ENCODE measurements at regions of chr3 and their contacts with region 1.

Region 1: GRCh38 chr3:101512646-101513418 is at the start of gene SENP7:
- DNase-seq: peak; percentile 55 to 90 (median 74)
- ATAC-seq: peak; percentile 51
- H3K4me3 ChIP-seq: peak within 1 kb of the TSS; percentile 68
- H3K4me3 Mint-ChIP-seq: peak within 1 kb of the TSS; percentile 99
- H3K27ac ChIP-seq: peak within 1 kb of the TSS; percentile 87 to 88
- H3K27ac Mint-ChIP-seq: peak within 1 kb of the TSS; percentile 96
- H3K4me1 ChIP-seq: peaks cover 22% of the 10 kb centered on the region
- H3K4me1 Mint-ChIP-seq: peaks cover 61% of the 10 kb centered on the region
- H3K27me3 ChIP-seq: no peaks in the 10 kb centered on the region
- H3K27me3 Mint-ChIP-seq: no peaks in the 10 kb centered on the region
- CTCF ChIP-seq: no peak
- total RNA-seq, gene SENP7: 37.5 to 39.3 TPM

Region 2: DNA sequence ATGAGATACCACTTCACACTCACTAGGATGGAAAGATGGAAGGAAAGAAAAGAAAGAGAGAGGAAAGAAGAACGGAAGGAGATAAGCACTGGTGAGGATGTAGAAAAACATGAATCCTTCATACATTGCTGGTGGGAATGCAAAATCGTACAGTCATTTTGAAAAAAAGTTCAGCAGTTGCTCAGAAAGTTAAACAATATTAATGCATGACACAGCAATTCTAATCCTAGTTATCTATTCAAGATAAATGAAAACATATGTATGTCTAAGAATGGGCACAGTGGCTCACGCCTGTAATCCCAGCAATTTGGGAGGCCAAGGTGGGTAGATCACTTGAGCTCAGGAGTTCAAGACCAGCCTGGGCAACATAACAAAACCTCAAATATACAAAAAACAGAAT is 58.9 kb before region 1 on chr3:
- CTCF ChIA-PET with region 1: no interaction called
- POLR2A ChIA-PET with region 1: no interaction called
- intact Hi-C with region 1: no loop called
- DNase-seq: no peak
- ATAC-seq: no peak
- H3K4me3 ChIP-seq: no peak overlapping the region
- H3K4me3 Mint-ChIP-seq: no peak overlapping the region
- H3K27ac ChIP-seq: no peak overlapping the region
- H3K27ac Mint-ChIP-seq: peak overlapping the region; percentile 16
- H3K4me1 ChIP-seq: no peaks in the 10 kb centered on the region
- H3K4me1 Mint-ChIP-seq: peaks cover 42% of the 10 kb centered on the region
- H3K27me3 ChIP-seq: no peaks in the 10 kb centered on the region
- H3K27me3 Mint-ChIP-seq: no peaks in the 10 kb centered on the region
- CTCF ChIP-seq: no peak

Region 3: GRCh38 chr3:101466465-101467309 is 46.1 kb before region 1 on chr3:
- CTCF ChIA-PET with region 1: no interaction called
- POLR2A ChIA-PET with region 1: interaction called, 3 read pairs
- intact Hi-C with region 1: loop called (anchors 5 kb)
- DNase-seq: peak in 8 of 14 experiments; percentile 47 to 75 (median 68)
- ATAC-seq: peak; percentile 79
- H3K4me3 ChIP-seq: peak overlapping the region; percentile 48
- H3K4me3 Mint-ChIP-seq: peak overlapping the region; percentile 83
- H3K27ac ChIP-seq: peak overlapping the region; percentile 13 to 64
- H3K27ac Mint-ChIP-seq: peak overlapping the region; percentile 89
- H3K4me1 ChIP-seq: peaks cover 19% of the 10 kb centered on the region
- H3K4me1 Mint-ChIP-seq: peaks cover 77% of the 10 kb centered on the region
- H3K27me3 ChIP-seq: no peaks in the 10 kb centered on the region
- H3K27me3 Mint-ChIP-seq: no peaks in the 10 kb centered on the region
- CTCF ChIP-seq: no peak

Region 4: DNA sequence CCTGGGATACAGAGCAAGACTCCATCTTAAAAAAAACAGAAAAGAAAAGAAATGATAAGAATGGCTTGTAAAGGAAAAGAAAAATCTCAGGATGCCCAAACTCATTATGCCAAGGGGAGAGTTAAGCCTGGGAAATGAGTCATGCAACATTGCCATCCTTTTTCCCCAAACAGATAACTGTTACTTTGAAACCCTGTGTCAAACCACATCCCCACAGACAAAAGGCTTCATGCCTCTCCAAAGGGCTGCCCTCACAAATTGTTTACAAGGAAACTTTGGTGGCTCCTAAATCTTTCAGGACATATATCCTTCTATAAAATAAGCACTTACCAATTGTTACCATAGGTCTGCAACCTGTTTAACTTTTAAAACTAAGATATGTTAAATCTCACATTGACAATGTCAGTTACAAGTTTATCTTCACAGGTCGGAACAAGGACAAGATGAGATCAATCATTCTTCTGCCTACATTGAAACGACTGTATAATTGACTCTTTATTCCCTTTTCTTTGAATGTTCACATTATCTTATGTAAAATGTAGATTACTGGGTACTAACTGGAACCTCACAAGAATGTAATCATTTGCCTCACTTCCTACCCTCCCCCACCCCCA is 18.7 kb after region 1 on chr3:
- CTCF ChIA-PET with region 1: interaction called, 5 read pairs
- POLR2A ChIA-PET with region 1: interaction called, 72 read pairs
- intact Hi-C with region 1: loop called in 1 of 2 experiments (anchors 2 kb)
- DNase-seq: peak in 3 of 14 experiments; percentile 39 to 56 (median 49)
- ATAC-seq: peak; percentile 71
- H3K4me3 ChIP-seq: no peak overlapping the region
- H3K4me3 Mint-ChIP-seq: peak overlapping the region; percentile 4
- H3K27ac ChIP-seq: peak overlapping the region in 1 of 2 donors; percentile 61
- H3K27ac Mint-ChIP-seq: peak overlapping the region; percentile 85
- H3K4me1 ChIP-seq: peaks cover 22% of the 10 kb centered on the region
- H3K4me1 Mint-ChIP-seq: peaks cover 52% of the 10 kb centered on the region
- H3K27me3 ChIP-seq: no peaks in the 10 kb centered on the region
- H3K27me3 Mint-ChIP-seq: no peaks in the 10 kb centered on the region
- CTCF ChIP-seq: no peak

Region 5: GRCh38 chr3:101544161-101544850 is 31.5 kb after region 1 on chr3:
- CTCF ChIA-PET with region 1: interaction called, 3 read pairs
- POLR2A ChIA-PET with region 1: interaction called, 39 read pairs
- intact Hi-C with region 1: no loop called
- DNase-seq: peak in 1 of 14 experiments; percentile 20
- ATAC-seq: peak; percentile 53
- H3K4me3 ChIP-seq: no peak overlapping the region
- H3K4me3 Mint-ChIP-seq: peak overlapping the region; percentile 38
- H3K27ac ChIP-seq: peak overlapping the region in 1 of 2 donors; percentile 35
- H3K27ac Mint-ChIP-seq: peak overlapping the region; percentile 93
- H3K4me1 ChIP-seq: peaks cover 19% of the 10 kb centered on the region
- H3K4me1 Mint-ChIP-seq: peaks cover 47% of the 10 kb centered on the region
- H3K27me3 ChIP-seq: no peaks in the 10 kb centered on the region
- H3K27me3 Mint-ChIP-seq: no peaks in the 10 kb centered on the region
- CTCF ChIP-seq: peak; percentile 50

Region 6: GRCh38 chr3:101561630-101562328 is 48.9 kb after region 1 on chr3 and contains the start of gene TRMT10C:
- CTCF ChIA-PET with region 1: no interaction called
- POLR2A ChIA-PET with region 1: interaction called, 32 read pairs
- intact Hi-C with region 1: loop called (anchors 1 to 2 kb)
- DNase-seq: peak; percentile 87 to 97 (median 91)
- ATAC-seq: peak; percentile 94
- H3K4me3 ChIP-seq: peak within 1 kb of the TSS; percentile 93
- H3K4me3 Mint-ChIP-seq: peak within 1 kb of the TSS; percentile 97
- H3K27ac ChIP-seq: peak within 1 kb of the TSS; percentile 81 to 89
- H3K27ac Mint-ChIP-seq: peak within 1 kb of the TSS; percentile 99
- H3K4me1 ChIP-seq: peaks cover 14% of the 10 kb centered on the region
- H3K4me1 Mint-ChIP-seq: peaks cover 50% of the 10 kb centered on the region
- H3K27me3 ChIP-seq: peaks cover 0 to 2% of the 10 kb centered on the region in 2 experiments
- H3K27me3 Mint-ChIP-seq: peaks cover under 1% of the 10 kb centered on the region
- CTCF ChIP-seq: no peak
- total RNA-seq, gene TRMT10C: 49.4 to 51.2 TPM

Measured in CD4-positive, alpha-beta T cell (primary cell).